ENCODE measurements at regions of chr10 and their contacts with region 1.

Region 1: DNA sequence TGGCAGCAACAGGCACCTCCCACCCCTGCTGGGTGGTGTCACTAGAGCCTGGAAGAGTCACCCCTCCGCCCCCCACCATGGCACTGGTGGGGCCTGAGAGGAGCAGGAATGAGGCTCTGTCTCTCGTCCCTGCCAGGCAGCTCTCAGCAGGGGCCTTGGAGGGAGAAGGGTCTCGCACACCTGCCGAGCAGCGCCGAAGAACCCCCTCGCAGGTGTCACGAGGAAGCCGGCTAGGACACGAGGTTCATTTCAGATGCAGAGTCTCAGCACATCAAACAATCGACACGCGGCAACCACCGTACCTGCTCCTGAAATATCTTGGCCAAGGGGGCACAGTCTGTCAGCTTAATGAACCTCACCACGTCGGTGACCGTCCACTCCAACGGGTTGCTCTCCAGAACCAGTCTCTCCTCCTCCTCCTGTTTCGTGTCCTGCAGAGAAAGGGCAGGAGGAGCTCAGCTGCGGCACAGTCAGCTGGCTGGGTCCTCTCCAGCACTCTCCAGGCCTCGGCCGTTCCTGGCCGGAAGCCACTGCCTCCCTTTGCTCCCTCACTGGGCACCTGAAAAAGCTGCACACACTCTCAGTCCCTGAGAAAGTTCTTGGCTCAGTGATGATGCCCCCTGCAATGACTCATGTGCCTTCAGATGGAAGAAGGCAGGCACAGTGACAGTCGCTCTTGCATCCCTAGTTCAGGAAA is 240.1 kb downstream of the SFMBT2 start:
- DNase-seq: no peak
- H3K4me3 ChIP-seq: no peak overlapping the region
- H3K27ac ChIP-seq: no peak overlapping the region
- H3K4me1 ChIP-seq: no peaks in the 10 kb centered on the region
- H3K27me3 ChIP-seq: no peaks in the 10 kb centered on the region
- CTCF ChIP-seq: no peak

Region 2: DNA sequence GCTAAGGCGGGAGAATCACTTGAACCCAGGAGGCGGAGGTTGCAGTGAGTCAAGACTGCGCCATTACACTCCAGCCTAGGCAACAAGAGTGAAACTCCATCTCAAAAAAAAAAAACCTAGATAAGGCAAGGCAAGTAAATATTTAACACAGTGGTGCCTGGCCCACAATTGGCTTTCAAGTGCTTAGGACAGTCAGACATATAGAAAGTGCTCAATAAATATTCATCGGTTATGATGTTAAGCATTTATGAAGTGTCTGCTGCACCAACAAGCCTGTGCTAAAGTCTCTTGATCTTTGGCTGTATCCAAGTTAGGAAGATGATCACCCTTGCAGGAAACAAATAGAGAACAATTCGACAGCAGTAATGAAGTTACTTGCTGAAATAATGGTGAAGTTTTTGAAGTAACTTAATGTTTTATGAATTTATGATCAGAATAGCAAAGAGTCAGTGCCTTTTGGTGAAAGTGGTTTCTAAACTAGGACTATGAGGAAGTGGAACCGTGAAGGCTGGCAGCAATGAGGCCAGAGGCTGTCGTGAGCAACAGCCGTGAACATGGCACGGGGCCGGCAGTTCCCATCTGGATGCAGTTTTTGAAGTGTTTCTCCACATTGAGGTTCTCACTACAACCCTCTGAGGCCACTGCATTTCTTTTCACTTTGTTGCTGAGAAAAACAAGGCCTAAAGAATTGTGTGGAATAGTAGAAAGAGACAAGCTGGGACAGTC is 835.7 kb after region 1 on chr10:
- CTCF ChIA-PET with region 1: no interaction called
- POLR2A ChIA-PET with region 1: interaction called, 11 read pairs
- intact Hi-C with region 1: no loop called
- DNase-seq: no peak
- H3K4me3 ChIP-seq: no peak overlapping the region
- H3K27ac ChIP-seq: no peak overlapping the region
- H3K4me1 ChIP-seq: no peaks in the 10 kb centered on the region
- H3K27me3 ChIP-seq: no peaks in the 10 kb centered on the region
- CTCF ChIP-seq: no peak

Measured in A673 (cell line).